ENCODE measurements at regions of chr9 and their contacts with region 1.

Region 1: DNA sequence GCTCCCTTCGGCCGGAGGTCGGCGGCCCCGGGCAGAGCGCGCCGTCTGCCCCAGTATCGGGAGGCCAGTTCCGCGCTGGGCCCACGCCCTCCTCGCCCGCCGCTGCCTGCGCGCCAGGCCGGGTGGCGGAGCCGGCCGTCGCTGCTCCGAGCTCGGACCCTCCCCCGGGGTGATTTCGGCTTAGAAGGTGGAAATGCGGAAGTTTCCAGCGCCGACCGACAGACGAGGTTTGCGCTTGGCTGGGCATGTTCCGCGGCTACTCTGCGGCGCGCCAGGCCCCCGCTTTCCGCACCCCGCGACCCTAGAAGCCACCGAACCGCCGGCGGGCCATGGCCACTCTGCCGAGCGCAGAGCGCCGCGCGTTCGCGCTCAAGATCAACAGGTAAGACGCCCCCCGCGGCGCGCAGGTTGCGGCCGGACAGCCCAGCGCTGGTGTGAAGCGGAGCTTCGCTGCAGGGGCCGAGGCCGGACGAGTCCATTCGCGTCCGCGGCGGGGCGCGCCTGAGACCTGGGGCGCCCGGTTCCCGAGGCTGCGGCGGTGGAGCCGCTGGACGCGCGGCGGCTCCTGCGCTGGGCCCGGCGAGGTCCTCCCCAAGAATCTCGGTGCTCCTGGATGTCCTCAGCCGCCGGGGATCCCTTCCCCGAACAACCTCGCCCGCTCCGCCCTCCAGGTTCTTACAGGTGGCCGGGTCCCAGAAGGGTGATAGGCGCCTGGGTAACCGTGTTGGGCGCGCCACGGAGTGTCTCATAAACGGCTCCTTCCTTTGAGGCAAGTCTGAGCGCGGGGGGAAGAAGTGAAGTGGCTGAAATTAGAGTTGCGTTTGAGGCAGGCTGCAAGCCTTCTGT is at the start of gene DOCK8:
- DNase-seq: peak; percentile 86
- CTCF ChIP-seq: peak; percentile 80

Region 2: GRCh38 chr9:272251-273213 is 57.7 kb after region 1 on chr9:
- in situ Hi-C with region 1: loop called (anchors 10 kb)
- DNase-seq: peak; percentile 72
- CTCF ChIP-seq: no peak

Measured in GM13977 (cell line).